SK-N-SH (cell line): ENCODE measurements at regions of chr14 and their contacts with region 1.

Region 1: GRCh38 chr14:59126710-59127432 is 61.6 kb upstream of the DAAM1 start:
- DNase-seq: peak; percentile 64
- H3K4me3 ChIP-seq: no peak overlapping the region; a peak in 1 of 4 replicates
- H3K27ac ChIP-seq: no peak overlapping the region
- H3K4me1 ChIP-seq: peaks cover 0 to 2% of the 10 kb centered on the region in 2 experiments; a peak in 1 of 4 replicates
- H3K27me3 ChIP-seq: no peaks in the 10 kb centered on the region
- CTCF ChIP-seq: peak; percentile 89
- EP300 ChIP-seq: no peak
- RAD21 ChIP-seq: peak; percentile 98

Region 2: DNA sequence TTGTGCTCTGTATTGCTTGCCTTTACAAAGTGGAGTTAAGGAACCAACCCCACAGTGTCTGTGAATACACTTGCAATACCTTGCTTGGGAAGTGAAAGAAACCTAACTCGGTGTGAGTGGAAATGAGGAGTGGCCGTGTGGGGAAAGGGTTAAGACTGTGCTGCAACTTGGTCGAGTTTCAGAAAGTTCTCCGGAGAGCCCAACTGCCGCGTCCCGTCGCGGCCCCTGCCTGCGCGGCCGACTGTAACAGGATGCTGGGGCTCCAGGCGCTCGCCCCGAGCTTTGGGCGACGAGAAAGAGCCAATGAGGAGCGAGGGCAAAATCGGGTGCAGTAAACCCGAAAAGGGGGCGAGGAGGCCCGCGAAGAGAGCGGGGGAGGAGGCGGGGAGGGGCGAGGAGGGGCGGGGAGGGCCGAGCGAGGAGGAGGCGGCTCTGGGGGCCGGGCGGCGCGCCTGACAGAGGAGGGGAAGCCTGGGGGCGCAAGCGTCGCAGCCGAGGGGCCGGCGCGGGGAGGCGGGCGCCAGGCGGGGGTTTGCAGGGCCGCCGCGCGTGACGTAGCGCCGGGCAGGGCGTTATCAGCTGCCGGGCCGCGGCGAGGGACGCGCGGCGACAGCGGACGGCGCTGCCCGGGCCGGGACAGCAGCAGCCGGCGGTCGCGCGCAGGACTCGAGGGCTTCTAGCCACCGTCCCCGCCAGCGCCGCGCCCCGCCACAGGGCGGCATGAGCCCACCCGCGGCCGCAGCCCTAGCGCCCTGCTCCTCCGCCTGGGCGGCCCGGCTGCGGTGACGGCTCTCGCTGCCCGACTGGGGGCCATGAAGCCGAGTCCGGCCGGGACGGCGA is 489.3 kb before region 1 on chr14 and contains the start of gene DACT1:
- CTCF ChIA-PET with region 1: interaction called, 38 read pairs
- POLR2A ChIA-PET with region 1: no interaction called
- DNase-seq: peak; percentile 82
- H3K4me3 ChIP-seq: peak within 1 kb of the TSS; percentile 74 to 77
- H3K27ac ChIP-seq: peak within 1 kb of the TSS; percentile 43 to 73
- H3K4me1 ChIP-seq: peaks cover 14 to 16% of the 10 kb centered on the region in 2 experiments; a peak in 3 of 4 replicates
- H3K27me3 ChIP-seq: no peaks in the 10 kb centered on the region
- CTCF ChIP-seq: no peak; the same call in 1 of the 2 replicates
- EP300 ChIP-seq: no peak
- RAD21 ChIP-seq: no peak
- polyA plus RNA-seq, gene DACT1: 3.3 and 4.2 TPM in 2 replicates

Region 3: GRCh38 chr14:59028476-59029202 is 98.2 kb before region 1 on chr14:
- CTCF ChIA-PET with region 1: interaction called, 94 read pairs
- POLR2A ChIA-PET with region 1: no interaction called
- DNase-seq: peak; percentile 69
- H3K4me3 ChIP-seq: peak overlapping the region in 1 of 2 experiments; percentile 8; a peak in 1 of 4 replicates
- H3K27ac ChIP-seq: peak overlapping the region; percentile 58 to 93; a peak in 3 of 4 replicates
- H3K4me1 ChIP-seq: peaks cover 0 to 5% of the 10 kb centered on the region in 2 experiments; a peak in 2 of 4 replicates
- H3K27me3 ChIP-seq: no peaks in the 10 kb centered on the region
- CTCF ChIP-seq: peak; percentile 95
- EP300 ChIP-seq: peak in 1 of 2 experiments; percentile 93; a peak in 2 of 4 replicates
- RAD21 ChIP-seq: peak; percentile 94

Region 4: DNA sequence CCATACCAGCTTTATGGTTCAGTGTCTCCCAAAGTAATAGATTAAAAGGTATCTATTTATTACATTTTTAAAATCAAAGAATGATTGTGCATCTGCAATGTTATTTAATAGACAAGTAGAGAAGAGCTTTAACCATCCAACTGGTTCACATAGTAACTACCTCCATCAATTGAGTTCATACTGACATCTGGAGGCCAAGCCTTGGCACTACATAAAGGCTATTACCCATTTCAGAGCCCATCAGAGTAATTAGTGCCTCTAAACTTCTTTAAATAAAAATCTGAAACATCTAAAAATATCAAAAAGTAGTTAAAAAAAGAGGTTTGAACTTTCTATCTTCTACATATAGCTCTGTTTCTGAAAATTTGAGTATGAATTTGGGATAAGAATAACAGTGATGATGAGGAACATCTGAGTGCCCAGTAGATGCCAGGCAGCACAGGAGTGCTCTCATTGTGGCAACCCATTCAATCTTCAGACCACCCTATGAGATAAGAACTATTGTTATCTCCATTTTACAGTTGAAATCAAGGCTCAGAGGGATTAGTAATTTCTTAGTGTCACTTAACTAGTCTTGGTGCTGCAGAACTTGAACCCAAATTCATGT is 71.3 kb before region 1 on chr14:
- CTCF ChIA-PET with region 1: interaction called, 11 read pairs
- POLR2A ChIA-PET with region 1: no interaction called
- DNase-seq: peak; percentile 65
- H3K4me3 ChIP-seq: no peak overlapping the region
- H3K27ac ChIP-seq: no peak overlapping the region
- H3K4me1 ChIP-seq: no peaks in the 10 kb centered on the region
- H3K27me3 ChIP-seq: no peaks in the 10 kb centered on the region
- CTCF ChIP-seq: peak; percentile 88
- EP300 ChIP-seq: no peak
- RAD21 ChIP-seq: peak; percentile 84

Region 5: GRCh38 chr14:59090572-59090971 is 36.3 kb before region 1 on chr14:
- CTCF ChIA-PET with region 1: interaction called, 12 read pairs
- POLR2A ChIA-PET with region 1: no interaction called
- DNase-seq: no peak
- H3K4me3 ChIP-seq: no peak overlapping the region
- H3K27ac ChIP-seq: peak overlapping the region; percentile 49 to 78; a peak in 3 of 4 replicates
- H3K4me1 ChIP-seq: peaks cover 4 to 43% of the 10 kb centered on the region in 2 experiments; a peak in 3 of 4 replicates
- H3K27me3 ChIP-seq: no peaks in the 10 kb centered on the region
- CTCF ChIP-seq: no peak
- EP300 ChIP-seq: peak in 1 of 2 experiments; percentile 69; a peak in 1 of 4 replicates
- RAD21 ChIP-seq: no peak

Region 6: DNA sequence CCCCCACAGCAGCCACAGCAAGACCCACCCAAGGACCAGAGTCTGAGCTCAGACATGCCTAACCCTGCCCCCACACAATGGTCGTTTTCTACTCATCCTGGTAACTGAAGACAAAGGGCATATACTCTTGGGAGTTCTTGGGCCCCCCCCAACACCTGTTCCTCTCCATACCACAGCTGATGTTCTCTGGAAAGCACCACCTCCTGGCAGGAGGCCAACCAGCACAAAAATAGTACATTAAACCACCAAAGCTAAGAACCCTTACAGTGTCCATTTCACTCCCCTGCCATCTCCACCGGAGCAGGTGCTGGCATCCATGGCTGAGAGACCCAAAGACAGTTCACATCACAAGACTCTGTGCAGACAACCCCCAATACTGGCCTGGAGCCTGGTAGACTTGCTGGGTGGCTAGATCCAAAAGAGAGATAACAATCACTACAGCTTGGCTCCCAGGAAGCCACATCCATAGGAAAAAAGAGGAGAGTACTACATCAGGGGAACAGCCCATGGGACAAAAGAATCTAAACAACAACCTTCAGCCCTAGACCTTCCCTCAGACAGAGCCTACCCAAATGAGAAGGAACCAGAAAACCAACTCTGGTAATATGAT is 18.9 kb before region 1 on chr14:
- CTCF ChIA-PET with region 1: interaction called, 22 read pairs
- POLR2A ChIA-PET with region 1: no interaction called
- DNase-seq: no peak
- H3K4me3 ChIP-seq: no peak overlapping the region
- H3K27ac ChIP-seq: no peak overlapping the region
- H3K4me1 ChIP-seq: peaks cover 0 to 4% of the 10 kb centered on the region in 2 experiments; a peak in 1 of 4 replicates
- H3K27me3 ChIP-seq: no peaks in the 10 kb centered on the region
- CTCF ChIP-seq: no peak
- EP300 ChIP-seq: no peak
- RAD21 ChIP-seq: no peak

Region 7: DNA sequence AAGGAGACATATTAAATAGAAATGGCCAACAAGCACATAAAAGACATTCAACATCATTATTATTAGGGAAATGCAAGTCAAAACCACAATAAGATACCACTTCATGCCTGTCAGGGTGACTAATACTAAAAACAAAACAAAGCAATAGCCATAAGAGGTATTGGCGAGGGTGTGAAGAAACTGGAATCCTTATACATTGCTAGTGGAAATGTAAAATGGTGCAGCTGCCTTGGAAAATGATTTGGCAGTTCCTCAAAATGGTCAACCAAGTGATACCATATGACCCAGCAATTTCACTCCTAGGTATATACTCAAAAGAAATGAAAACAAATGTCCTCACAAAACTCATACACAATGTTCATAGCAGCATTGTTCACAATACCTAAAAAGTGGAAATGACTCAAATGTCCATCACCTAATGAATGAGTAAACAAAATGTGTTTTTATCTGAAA is 311.4 kb after region 1 on chr14:
- CTCF ChIA-PET with region 1: interaction called, 57 read pairs
- POLR2A ChIA-PET with region 1: no interaction called
- DNase-seq: no peak
- H3K4me3 ChIP-seq: no peak overlapping the region
- H3K27ac ChIP-seq: peak overlapping the region in 1 of 2 experiments; percentile 65; a peak in 3 of 4 replicates
- H3K4me1 ChIP-seq: peaks cover 0 to 21% of the 10 kb centered on the region in 2 experiments; a peak in 3 of 4 replicates
- H3K27me3 ChIP-seq: no peaks in the 10 kb centered on the region
- CTCF ChIP-seq: no peak
- EP300 ChIP-seq: no peak
- RAD21 ChIP-seq: no peak